HEK293 (cell line): ENCODE measurements at regions of chr1 and their contacts with region 1.

Region 1: GRCh38 chr1:36187800-36188593 is 32.0 kb downstream of the MAP7D1 start:
- H3K4me3 ChIP-seq: no peak overlapping the region
- H3K27ac ChIP-seq: no peak overlapping the region; the same call in 1 of the 2 replicates
- H3K4me1 ChIP-seq: no peaks in the 10 kb centered on the region
- CTCF ChIP-seq: peak; percentile 96

Region 2: DNA sequence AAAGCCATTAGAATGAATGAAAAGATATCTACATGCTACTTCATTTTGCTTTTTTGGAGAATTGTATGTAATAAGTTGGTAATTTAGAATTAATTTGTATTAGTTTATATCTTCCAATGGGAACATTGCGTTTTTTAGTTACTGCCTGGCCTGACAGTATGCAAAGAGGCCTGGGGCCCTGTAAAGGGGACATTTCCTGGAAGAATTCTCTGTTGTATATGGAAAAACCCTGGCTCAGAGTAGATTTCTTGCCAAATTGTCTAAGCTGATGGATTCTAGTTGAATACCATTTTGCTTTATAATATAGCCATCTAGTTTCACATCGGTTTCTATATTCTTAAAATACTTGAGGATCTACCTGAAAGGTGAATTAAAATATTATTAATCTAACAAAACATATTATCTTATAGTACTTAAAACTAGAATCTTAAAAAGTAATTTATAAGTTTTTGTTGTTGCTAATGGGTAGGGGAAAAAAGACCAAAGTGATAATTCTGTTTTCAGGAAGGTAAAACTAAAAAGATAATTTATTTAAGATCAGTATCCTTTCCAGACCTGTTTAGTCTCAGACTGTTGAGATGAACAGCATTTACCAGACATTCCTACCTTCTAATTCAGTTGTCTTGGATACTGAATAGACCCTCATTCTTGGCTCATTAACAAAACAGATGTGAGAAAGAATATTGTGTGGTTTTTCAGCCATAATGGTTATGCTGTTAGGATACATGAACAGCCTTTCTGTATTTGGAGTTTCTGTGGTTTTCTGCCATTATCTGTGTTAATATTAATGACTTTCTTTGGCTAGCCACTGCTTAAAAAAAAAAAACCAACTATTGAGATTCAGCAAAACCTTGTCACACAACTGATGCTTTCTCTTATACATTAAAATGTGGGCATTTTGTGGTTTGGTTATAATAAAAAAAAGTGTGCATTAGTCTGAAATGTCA is 252.3 kb before region 1 on chr1:
- CTCF ChIA-PET with region 1: no interaction called
- POLR2A ChIA-PET with region 1: no interaction called
- H3K4me3 ChIP-seq: no peak overlapping the region
- H3K27ac ChIP-seq: no peak overlapping the region
- H3K4me1 ChIP-seq: peaks cover 21% of the 10 kb centered on the region
- CTCF ChIP-seq: no peak

Region 3: DNA sequence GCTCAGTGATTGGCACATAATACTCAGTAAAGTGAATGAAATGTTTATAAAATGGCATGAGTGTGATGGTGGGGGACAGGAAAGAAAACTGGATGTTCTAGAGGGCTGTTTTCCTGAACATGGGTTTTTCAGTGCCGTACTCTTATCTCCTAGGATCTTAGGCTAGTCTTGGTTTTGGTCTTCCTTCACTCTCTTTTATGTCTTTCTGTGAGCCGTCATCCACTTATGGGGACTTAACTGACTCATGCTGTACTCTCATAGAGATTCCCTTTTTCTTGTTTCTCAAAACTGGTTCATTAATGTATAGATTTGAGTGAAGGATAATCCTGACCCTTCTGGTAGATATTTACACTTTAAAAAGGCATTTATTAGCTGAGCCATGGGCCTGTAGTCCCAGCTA is 240.4 kb before region 1 on chr1:
- CTCF ChIA-PET with region 1: no interaction called
- POLR2A ChIA-PET with region 1: no interaction called
- H3K4me3 ChIP-seq: no peak overlapping the region
- H3K27ac ChIP-seq: no peak overlapping the region
- H3K4me1 ChIP-seq: no peaks in the 10 kb centered on the region
- CTCF ChIP-seq: no peak

Region 4: DNA sequence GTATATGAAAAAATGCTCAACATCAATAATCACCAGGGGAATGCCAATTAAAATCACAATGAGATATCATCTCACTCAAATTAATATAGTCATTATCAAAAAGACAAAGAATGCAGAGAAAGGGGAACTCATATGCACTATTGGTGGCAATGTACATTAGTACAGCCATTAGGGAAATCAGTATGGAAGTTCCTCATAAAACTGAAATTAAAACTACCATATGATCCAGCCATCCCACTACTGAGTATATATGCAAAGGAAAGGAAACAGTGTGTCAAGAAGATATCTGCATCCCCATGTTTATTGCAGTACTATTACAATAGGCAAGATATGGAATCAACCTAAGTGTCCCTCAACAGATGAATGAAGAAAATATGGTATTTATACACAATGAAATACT is 136.2 kb before region 1 on chr1:
- CTCF ChIA-PET with region 1: no interaction called
- POLR2A ChIA-PET with region 1: no interaction called
- H3K4me3 ChIP-seq: no peak overlapping the region
- H3K27ac ChIP-seq: no peak overlapping the region
- H3K4me1 ChIP-seq: no peaks in the 10 kb centered on the region
- CTCF ChIP-seq: no peak

Region 5: DNA sequence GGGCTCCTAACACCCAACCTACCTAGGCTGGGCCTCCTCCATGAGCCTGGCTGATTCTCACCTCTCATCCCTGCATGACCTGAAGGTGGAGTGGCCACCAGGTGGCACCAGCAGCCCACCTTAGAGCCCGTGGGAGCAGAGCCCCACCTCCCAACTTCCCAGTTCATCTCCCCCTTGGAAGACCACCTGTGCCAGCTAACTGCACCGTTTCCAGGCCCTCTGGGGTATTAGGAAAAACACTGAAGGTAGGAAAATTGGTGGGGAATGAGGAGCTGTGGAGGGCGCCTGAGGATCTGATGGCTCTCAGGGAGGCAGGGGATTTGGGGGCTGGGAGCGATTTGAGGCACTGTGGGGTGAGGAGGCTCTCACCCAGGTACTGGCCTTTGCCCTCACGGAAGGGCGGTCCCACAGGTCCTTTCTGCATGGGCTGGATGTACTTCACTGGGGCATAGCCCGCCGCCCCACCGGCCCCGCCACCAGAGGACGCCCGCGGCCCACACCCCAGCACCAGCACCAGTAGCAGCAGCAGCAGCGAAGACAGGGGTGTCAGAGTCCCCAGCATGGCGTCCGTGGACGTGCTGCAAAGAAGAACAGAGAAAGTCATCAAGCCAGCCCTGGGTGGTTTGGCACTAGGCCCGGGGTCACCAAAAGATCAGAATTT is 88.2 kb before region 1 on chr1:
- CTCF ChIA-PET with region 1: interaction called, 29 read pairs
- POLR2A ChIA-PET with region 1: no interaction called
- H3K4me3 ChIP-seq: no peak overlapping the region
- H3K27ac ChIP-seq: no peak overlapping the region
- H3K4me1 ChIP-seq: no peaks in the 10 kb centered on the region
- CTCF ChIP-seq: peak; percentile 85

Region 6: DNA sequence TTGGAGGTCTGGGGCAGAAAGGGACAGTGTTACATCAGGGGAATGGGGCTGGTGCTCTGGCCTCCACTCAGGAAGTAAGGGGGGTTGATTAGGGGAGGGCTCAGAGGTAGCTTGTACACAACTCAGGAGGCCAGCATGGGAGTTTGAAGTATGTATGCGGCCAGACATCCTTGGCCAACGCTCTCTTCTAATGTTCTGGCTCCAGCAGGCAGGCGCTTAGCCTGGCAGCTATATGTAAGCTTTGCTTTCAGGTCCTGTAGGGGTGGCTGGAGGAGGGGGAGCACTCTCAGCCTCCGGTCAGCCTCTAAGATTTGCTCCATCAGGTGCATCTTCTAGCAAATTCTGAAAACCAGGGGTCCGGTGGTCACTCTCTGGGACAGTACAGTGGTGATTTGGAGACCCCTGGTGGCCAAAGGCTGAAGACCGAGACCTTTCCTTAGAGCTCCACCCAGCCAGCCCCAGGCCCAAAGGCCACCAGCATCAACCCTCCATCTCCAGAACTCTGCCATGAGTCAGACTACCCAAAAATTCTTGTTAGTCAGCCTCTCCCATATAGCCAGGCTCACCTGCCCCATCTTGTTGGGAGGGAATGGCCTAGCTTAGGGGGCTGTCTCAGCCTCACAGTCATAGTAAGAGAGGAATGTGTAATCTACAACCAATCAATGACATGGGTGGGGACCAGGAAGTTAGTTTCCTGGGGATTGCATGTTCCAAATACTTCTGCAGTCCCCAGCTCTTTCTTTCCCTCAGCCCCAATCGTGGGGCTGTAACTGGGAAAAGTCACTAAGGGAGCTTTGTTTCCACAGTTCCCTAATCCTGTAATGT is 53.3 kb before region 1 on chr1:
- CTCF ChIA-PET with region 1: interaction called, 18 read pairs
- POLR2A ChIA-PET with region 1: no interaction called
- H3K4me3 ChIP-seq: no peak overlapping the region
- H3K27ac ChIP-seq: no peak overlapping the region
- H3K4me1 ChIP-seq: no peaks in the 10 kb centered on the region
- CTCF ChIP-seq: peak; percentile 62

Region 7: GRCh38 chr1:36155408-36156328 is 32.3 kb before region 1 on chr1 and contains the start of gene MAP7D1:
- CTCF ChIA-PET with region 1: interaction called, 132 read pairs
- POLR2A ChIA-PET with region 1: interaction called, 26 read pairs
- H3K4me3 ChIP-seq: peak within 1 kb of the TSS; percentile 86
- H3K27ac ChIP-seq: peak within 1 kb of the TSS; percentile 98
- H3K4me1 ChIP-seq: peaks cover 5% of the 10 kb centered on the region
- CTCF ChIP-seq: no peak

Region 8: GRCh38 chr1:36170643-36171412 is 17.2 kb before region 1 on chr1:
- CTCF ChIA-PET with region 1: interaction called, 14 read pairs
- POLR2A ChIA-PET with region 1: interaction called, 3 read pairs
- H3K4me3 ChIP-seq: no peak overlapping the region
- H3K27ac ChIP-seq: no peak overlapping the region
- H3K4me1 ChIP-seq: no peaks in the 10 kb centered on the region
- CTCF ChIP-seq: no peak

Region 9: DNA sequence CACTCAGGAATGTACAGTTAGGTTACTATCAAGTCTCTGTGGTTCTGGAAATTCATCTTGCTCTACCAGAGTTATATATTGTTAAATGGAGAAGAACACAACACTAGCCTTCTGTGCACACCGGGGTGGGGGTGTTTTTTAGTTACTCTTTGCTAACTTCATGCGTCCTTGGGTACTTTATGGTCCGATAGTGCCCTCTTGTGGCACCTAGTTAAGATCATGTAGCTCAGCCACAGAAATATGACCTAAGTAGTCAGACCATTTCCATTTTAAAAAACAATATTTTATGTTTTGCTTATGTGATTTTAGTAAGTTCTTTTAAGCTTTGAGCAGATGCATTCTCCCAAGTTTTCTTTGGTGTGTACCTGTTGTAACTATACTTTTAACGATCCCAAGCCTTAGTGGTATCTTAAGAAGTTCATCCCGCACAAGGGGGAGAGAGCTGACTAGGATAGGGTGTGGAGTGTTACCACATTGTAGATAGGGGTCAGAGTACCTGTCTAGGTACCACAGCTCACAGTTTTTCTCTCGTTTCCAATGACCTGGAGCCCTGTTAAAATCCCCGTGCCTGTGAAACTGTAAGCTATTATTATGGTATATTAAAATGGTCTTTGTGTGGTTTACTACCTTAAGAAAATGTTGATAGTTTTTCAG is 97.6 kb after region 1 on chr1:
- CTCF ChIA-PET with region 1: interaction called, 34 read pairs
- POLR2A ChIA-PET with region 1: no interaction called
- H3K4me3 ChIP-seq: no peak overlapping the region
- H3K27ac ChIP-seq: no peak overlapping the region
- H3K4me1 ChIP-seq: no peaks in the 10 kb centered on the region
- CTCF ChIP-seq: peak; percentile 58; the same call in 1 of the 2 replicates